ENCODE measurements at regions of chr3 and their contacts with region 1.

Region 1: DNA sequence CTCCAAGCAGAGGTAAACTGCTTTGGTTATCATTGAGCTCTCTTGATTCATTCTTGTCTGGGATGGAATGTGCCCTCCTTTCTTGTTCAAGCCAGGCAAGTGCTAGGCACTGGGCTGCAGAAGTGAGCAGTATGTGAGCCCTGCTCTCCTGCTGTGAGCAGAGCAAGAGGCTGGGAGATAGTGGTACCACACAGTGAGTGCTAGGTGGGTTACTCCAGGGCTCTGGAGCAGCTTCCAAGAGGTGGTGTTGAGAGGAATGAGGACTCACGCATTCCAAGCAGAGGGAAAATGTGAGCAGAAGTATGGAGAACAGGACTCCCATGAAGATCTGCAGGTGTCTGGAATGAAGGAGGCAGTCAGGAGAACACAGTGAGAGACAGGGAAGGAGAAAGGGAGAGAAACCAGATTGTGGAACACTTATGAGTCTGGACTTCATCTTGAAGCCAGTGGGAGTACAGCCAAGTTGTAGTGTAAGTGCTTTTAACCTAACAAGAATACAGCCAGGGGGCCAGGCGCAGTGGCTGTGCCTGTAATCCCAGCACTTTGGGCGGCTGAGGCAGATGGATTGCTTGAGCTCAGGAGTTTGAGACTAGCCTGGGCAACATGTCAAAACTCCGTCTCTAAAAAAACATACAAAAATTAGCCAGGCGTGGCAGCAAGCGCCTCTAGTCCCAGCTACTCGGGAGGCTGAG is 199.9 kb upstream of the CTDSPL start:
- DNase-seq: no peak
- H3K4me3 ChIP-seq: no peak overlapping the region
- H3K27ac ChIP-seq: no peak overlapping the region
- H3K4me1 ChIP-seq: no peaks in the 10 kb centered on the region
- H3K27me3 ChIP-seq: peaks cover 8% of the 10 kb centered on the region; the same call in 1 of the 2 replicates
- CTCF ChIP-seq: no peak

Region 2: DNA sequence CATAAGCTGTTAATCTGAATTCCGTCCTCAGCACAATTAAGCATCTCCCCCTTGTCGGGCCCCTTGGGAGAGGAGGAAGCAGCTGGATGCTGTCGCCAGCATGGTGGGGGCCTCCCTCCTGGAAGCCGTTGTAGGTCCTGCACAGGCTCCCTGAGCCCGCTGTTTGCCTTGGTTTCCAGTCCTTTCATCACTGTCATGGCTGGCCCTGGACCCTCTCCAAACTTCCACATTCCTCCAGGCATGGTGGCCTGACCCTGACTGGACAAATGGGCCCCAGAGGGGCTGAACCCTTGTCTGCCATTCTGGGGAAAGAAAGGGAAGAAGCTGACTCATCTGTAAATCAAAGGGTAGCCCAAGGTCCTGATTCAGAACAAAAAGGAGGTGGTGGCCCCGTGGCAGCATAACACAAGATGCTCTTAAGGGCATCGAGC is 186.8 kb before region 1 on chr3:
- CTCF ChIA-PET with region 1: no interaction called
- POLR2A ChIA-PET with region 1: interaction called, 12 read pairs
- intact Hi-C with region 1: no loop called
- DNase-seq: no peak
- H3K4me3 ChIP-seq: no peak overlapping the region
- H3K27ac ChIP-seq: no peak overlapping the region
- H3K4me1 ChIP-seq: no peaks in the 10 kb centered on the region
- H3K27me3 ChIP-seq: peaks cover 39% of the 10 kb centered on the region
- CTCF ChIP-seq: no peak

Region 3: DNA sequence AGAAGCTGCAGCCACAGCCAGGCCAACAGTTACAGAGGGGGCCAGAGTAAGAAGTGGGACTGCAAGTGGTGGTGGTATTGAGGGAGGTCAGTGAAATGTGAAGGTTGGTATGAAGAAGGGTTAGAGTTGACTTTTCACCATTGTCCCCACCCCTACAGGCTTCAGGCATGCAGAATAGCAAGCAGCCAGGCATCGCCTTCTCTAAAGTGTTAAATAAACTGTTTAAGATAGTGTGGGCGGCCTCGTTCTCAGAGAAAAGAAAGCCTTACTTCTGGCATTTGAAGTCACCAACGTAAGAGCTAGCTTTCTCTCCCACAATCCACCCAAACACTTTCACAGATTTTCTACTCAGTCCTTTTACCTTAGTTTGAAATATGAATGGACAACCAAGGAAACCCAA is 30.1 kb before region 1 on chr3:
- CTCF ChIA-PET with region 1: no interaction called
- POLR2A ChIA-PET with region 1: no interaction called
- intact Hi-C with region 1: no loop called
- DNase-seq: no peak
- H3K4me3 ChIP-seq: no peak overlapping the region
- H3K27ac ChIP-seq: no peak overlapping the region
- H3K4me1 ChIP-seq: no peaks in the 10 kb centered on the region
- H3K27me3 ChIP-seq: peaks cover 51% of the 10 kb centered on the region
- CTCF ChIP-seq: no peak

Measured in PC-9 (cell line).